CD4-positive, alpha-beta T cell (primary cell): ENCODE measurements at regions of chr3 and their contacts with region 1.

Region 1: DNA sequence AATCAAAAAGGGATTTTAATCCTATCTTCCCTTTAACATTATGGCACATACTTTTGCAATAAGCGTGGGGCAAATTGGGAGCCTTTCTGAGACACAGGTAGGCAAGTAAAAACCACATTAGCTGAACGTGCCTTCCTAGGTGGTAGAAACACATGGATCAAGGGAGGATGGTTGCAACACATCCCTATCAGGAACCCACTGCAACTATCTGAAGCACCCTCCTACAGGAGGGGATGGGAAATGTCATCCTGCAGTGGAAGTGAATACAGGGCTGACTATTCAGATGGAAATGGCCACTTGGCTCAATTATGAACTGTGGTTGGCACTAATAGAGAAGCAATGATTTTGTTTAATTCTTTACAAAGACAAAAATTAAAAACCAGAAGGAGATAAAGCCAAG is 826.3 kb downstream of the FHIT start:
- DNase-seq: no peak
- ATAC-seq: no peak
- H3K4me3 ChIP-seq: no peak overlapping the region
- H3K4me3 Mint-ChIP-seq: no peak overlapping the region
- H3K27ac ChIP-seq: no peak overlapping the region
- H3K27ac Mint-ChIP-seq: no peak overlapping the region
- H3K4me1 ChIP-seq: no peaks in the 10 kb centered on the region
- H3K4me1 Mint-ChIP-seq: peaks cover 9% of the 10 kb centered on the region
- H3K27me3 ChIP-seq: no peaks in the 10 kb centered on the region
- H3K27me3 Mint-ChIP-seq: no peaks in the 10 kb centered on the region
- CTCF ChIP-seq: no peak

Region 2: DNA sequence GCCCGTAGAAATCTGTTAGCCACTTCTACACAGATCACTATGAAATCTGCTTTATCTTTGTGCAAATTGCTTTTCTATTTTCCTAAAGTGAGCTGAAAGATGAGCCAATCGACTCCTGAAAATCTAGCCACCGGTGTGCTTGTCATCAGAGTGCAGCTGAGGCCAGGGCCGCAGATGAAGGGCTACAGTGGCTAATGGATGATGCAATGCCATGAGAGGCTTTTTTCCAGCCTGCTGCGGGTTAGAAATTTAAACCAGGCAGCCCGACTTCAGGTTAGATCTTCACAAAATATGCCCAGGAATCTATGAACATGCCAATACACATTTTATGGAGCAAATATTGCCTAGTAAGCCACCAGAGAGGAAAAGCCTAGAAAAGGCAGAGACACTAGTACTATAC is 426.9 kb before region 1 on chr3:
- CTCF ChIA-PET with region 1: no interaction called
- POLR2A ChIA-PET with region 1: no interaction called
- intact Hi-C with region 1: loop called in 1 of 2 experiments (anchors 10 kb)
- DNase-seq: no peak
- ATAC-seq: no peak
- H3K4me3 ChIP-seq: no peak overlapping the region
- H3K4me3 Mint-ChIP-seq: no peak overlapping the region
- H3K27ac ChIP-seq: no peak overlapping the region
- H3K27ac Mint-ChIP-seq: no peak overlapping the region
- H3K4me1 ChIP-seq: peaks cover 26% of the 10 kb centered on the region
- H3K4me1 Mint-ChIP-seq: peaks cover 80% of the 10 kb centered on the region
- H3K27me3 ChIP-seq: no peaks in the 10 kb centered on the region
- H3K27me3 Mint-ChIP-seq: no peaks in the 10 kb centered on the region
- CTCF ChIP-seq: no peak

Region 3: GRCh38 chr3:60720736-60721135 is 295.8 kb after region 1 on chr3:
- CTCF ChIA-PET with region 1: no interaction called
- POLR2A ChIA-PET with region 1: no interaction called
- intact Hi-C with region 1: no loop called
- DNase-seq: no peak
- ATAC-seq: no peak
- H3K4me3 ChIP-seq: no peak overlapping the region
- H3K4me3 Mint-ChIP-seq: no peak overlapping the region
- H3K27ac ChIP-seq: no peak overlapping the region
- H3K27ac Mint-ChIP-seq: no peak overlapping the region
- H3K4me1 ChIP-seq: no peaks in the 10 kb centered on the region
- H3K4me1 Mint-ChIP-seq: no peaks in the 10 kb centered on the region
- H3K27me3 ChIP-seq: no peaks in the 10 kb centered on the region
- H3K27me3 Mint-ChIP-seq: no peaks in the 10 kb centered on the region
- CTCF ChIP-seq: no peak